ENCODE measurements at regions of chr11 and their contacts with region 1.

Region 1: GRCh38 chr11:118907051-118908042 is 18.4 kb downstream of the BCL9L start:
- DNase-seq: peak; percentile 82
- H3K4me3 ChIP-seq: no peak overlapping the region
- H3K27ac ChIP-seq: no peak overlapping the region
- H3K4me1 ChIP-seq: peaks cover 30% of the 10 kb centered on the region
- H3K27me3 ChIP-seq: no peaks in the 10 kb centered on the region
- CTCF ChIP-seq: peak; percentile 84 to 88
- POLR2A ChIP-seq: no peak

Region 2: DNA sequence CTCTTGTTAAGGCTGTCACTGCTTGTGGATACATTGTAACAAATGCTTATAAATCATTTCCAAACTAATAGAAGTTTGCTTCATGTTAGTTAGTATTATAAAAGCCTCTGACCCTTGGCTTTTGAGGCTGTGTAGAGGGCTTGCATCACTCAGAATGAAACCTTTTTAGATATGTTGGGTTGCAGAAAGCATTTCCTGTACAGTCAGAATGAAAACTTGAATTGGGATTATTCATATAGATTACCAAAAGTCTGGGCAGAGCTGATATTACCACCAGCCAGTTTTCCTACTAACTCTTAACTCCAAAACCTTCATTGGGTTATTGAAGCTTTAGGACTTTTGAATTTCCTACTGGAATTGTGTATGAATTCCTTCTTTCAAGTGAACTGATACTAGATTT is 459.1 kb before region 1 on chr11:
- CTCF ChIA-PET with region 1: no interaction called
- POLR2A ChIA-PET with region 1: no interaction called
- dilution Hi-C with region 1: no loop called
- intact Hi-C with region 1: no loop called
- DNase-seq: peak; percentile 10
- H3K4me3 ChIP-seq: no peak overlapping the region
- H3K27ac ChIP-seq: no peak overlapping the region
- H3K4me1 ChIP-seq: peaks cover 4% of the 10 kb centered on the region
- H3K27me3 ChIP-seq: no peaks in the 10 kb centered on the region
- CTCF ChIP-seq: no peak
- POLR2A ChIP-seq: no peak

Region 3: DNA sequence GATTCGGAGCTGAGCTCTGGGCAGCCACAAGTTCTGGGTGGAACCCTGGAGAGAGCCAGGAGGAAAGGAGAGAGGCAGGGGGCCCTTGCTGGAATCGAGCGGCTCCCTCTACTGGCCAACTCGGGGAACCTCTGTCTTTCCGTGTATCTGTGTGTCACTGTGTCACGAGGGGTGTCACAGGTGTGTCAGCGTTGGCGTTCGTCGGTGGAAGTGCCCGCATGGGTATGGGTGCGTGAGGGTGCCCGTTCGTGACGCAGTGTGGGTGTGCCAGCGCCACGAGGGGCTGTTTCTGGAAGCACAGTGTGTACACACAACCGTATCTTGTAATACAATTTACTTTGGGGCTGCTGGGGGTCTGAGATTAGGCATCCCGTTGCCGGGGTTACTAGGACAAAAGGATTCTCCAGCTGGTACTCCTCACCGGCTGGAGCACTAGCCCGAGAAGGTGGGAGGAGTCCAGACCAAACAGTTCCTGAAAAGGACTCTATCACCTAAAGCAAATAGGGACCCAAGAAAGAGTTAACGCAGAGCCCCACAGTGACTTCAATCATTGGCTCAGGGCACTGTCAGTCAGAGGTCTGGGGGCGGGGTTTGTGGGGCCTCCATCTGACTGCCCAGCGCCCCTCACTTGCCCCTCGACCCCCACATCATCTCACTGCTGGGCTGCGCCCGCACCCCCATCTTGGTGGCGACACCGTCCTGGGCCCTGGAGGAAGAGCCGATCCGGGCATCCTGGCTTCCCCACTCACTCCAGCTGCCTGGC is 20.9 kb after region 1 on chr11:
- CTCF ChIA-PET with region 1: interaction called, 330 read pairs
- POLR2A ChIA-PET with region 1: interaction called, 52 read pairs
- dilution Hi-C with region 1: no loop called
- intact Hi-C with region 1: loop called (anchors 1 kb)
- DNase-seq: peak; percentile 91
- H3K4me3 ChIP-seq: peak overlapping the region; percentile 34 to 77 (median 64)
- H3K27ac ChIP-seq: peak overlapping the region; percentile 27
- H3K4me1 ChIP-seq: peaks cover 21% of the 10 kb centered on the region
- H3K27me3 ChIP-seq: peaks cover 0 to 2% of the 10 kb centered on the region in 2 experiments
- CTCF ChIP-seq: peak; percentile 89 to 92
- POLR2A ChIP-seq: no peak

Region 4: DNA sequence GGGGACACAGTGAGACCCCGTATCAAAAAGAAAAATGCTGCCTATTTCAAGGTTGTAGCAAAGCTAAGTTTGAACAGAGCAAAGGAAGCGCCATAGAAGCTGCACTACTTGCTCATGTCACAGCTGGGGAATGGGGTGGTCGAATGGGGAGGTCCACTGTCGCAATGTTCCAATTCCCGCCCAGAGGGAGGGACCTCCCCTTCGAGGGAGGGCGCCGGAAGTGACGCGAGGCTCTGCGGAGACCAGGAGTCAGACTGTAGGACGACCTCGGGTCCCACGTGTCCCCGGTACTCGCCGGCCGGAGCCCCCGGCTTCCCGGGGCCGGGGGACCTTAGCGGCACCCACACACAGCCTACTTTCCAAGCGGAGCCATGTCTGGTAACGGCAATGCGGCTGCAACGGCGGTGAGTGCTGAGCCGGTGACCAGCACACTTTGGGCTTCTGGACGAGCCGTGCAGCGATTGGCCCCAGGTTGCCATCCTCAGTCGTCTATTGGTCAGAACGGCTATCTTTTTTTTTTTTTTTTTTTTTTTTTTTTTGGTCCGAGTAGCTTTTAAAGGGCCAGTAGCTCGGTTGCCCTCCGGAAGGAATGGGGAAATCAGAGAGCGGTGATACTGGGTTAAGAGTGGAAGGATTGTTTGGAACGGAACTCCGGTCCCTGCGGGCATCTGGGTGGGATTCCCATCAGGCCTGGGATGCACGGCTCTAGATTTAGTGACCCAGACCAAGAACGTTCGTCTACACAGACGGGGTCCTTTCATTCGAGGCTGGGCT is 177.5 kb after region 1 on chr11 and contains the start of gene HMBS:
- CTCF ChIA-PET with region 1: no interaction called
- POLR2A ChIA-PET with region 1: no interaction called
- dilution Hi-C with region 1: no loop called
- intact Hi-C with region 1: loop called (anchors 5 kb)
- DNase-seq: peak; percentile 95
- H3K4me3 ChIP-seq: peak within 1 kb of the TSS; percentile 10 to 77 (median 70)
- H3K27ac ChIP-seq: peak within 1 kb of the TSS; percentile 49
- H3K4me1 ChIP-seq: peaks cover 12% of the 10 kb centered on the region
- H3K27me3 ChIP-seq: no peaks in the 10 kb centered on the region
- CTCF ChIP-seq: no peak
- POLR2A ChIP-seq: peak; percentile 97
- total RNA-seq, gene HMBS: 13.5 and 16.1 TPM in 2 replicates

Region 5: GRCh38 chr11:119315131-119316015 is 408.0 kb after region 1 on chr11:
- CTCF ChIA-PET with region 1: no interaction called
- POLR2A ChIA-PET with region 1: no interaction called
- dilution Hi-C with region 1: no loop called
- intact Hi-C with region 1: loop called (anchors 5 kb)
- DNase-seq: peak; percentile 49
- H3K4me3 ChIP-seq: peak overlapping the region; percentile 87 to 93 (median 89)
- H3K27ac ChIP-seq: peak overlapping the region; percentile 80
- H3K4me1 ChIP-seq: peaks cover 44% of the 10 kb centered on the region
- H3K27me3 ChIP-seq: no peaks in the 10 kb centered on the region
- CTCF ChIP-seq: peak; percentile 16 to 46
- POLR2A ChIP-seq: no peak

Measured in endothelial cell of umbilical vein (primary cell).